PC-9 (cell line): ENCODE measurements at regions of chr2 and their contacts with region 1.

Region 1: GRCh38 chr2:237864940-237865622 is 5.7 kb downstream of the RAMP1 start:
- DNase-seq: peak; percentile 85 to 87
- H3K4me3 ChIP-seq: peak overlapping the region; percentile 12; the same call in 1 of the 2 replicates
- H3K27ac ChIP-seq: peak overlapping the region; percentile 82
- H3K4me1 ChIP-seq: peaks cover 99% of the 10 kb centered on the region
- H3K27me3 ChIP-seq: no peaks in the 10 kb centered on the region
- CTCF ChIP-seq: no peak

Region 2: DNA sequence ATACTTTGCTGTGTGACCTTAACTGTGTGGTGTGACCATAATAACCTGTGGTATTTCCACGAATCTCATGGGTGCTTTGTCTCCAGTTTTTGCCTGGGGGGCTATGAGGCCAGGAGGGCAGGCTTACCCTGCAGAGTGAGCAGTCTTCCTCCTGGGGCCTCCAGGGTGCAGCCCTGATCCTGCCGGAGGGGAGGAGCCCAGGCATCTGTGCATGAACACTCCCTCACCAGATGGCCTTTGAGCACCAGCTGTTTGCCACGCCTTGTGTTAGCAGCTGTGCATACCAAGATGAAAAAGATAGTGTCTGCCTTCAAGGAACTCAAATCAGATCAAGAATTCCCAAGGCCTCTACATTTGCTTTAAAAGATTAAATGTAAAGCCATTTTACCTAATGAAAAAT is 141.5 kb before region 1 on chr2:
- CTCF ChIA-PET with region 1: no interaction called
- POLR2A ChIA-PET with region 1: interaction called, 28 read pairs
- intact Hi-C with region 1: no loop called
- DNase-seq: peak; percentile 67 to 70
- H3K4me3 ChIP-seq: no peak overlapping the region
- H3K27ac ChIP-seq: no peak overlapping the region
- H3K4me1 ChIP-seq: peaks cover 8% of the 10 kb centered on the region; the same call in 1 of the 2 replicates
- H3K27me3 ChIP-seq: no peaks in the 10 kb centered on the region
- CTCF ChIP-seq: no peak

Region 3: DNA sequence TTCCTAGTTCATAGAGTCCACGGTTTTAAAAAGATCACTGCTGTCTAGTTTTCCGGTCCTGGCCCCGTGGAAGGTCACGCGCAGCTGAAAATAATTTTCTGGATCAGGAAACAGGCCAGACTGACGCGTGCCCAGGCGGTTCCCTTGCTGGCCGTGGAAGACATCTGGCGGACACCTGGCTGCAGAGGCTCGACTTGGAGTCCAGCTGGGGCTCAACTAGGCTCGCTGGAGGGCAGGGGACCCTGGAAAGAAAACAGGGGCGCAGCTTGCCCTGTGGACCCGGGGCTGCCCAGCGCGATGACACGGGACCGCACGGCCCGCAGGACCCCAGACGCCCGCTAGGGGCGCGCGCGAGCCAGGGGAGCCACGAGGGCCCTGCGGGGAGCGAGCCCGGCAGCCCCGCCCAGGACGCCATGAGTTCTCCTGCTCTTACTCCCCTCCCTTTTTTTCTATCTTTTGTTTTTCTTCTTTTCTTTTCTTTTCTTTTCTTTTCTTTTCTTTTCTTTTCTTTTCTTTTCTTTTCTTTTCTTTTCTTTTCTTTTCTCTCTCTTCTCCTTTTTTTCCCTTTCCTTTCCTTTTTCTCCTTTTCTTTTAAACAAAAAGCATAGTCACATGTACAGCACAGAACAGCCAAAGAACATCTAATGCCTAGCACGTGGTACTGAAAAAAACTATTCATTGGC is 58.5 kb after region 1 on chr2:
- CTCF ChIA-PET with region 1: no interaction called
- POLR2A ChIA-PET with region 1: interaction called, 6 read pairs
- intact Hi-C with region 1: loop called (anchors 5 kb)
- DNase-seq: no peak
- H3K4me3 ChIP-seq: no peak overlapping the region
- H3K27ac ChIP-seq: no peak overlapping the region
- H3K4me1 ChIP-seq: peaks cover 23% of the 10 kb centered on the region
- H3K27me3 ChIP-seq: no peaks in the 10 kb centered on the region
- CTCF ChIP-seq: no peak

Region 4: GRCh38 chr2:238119756-238120462 is 254.8 kb after region 1 on chr2:
- CTCF ChIA-PET with region 1: no interaction called
- POLR2A ChIA-PET with region 1: interaction called, 31 read pairs
- intact Hi-C with region 1: no loop called
- DNase-seq: no peak
- H3K4me3 ChIP-seq: no peak overlapping the region
- H3K27ac ChIP-seq: no peak overlapping the region
- H3K4me1 ChIP-seq: 0 out of 2 replicates have a peak, but pooled peaks cover 4% of the 10 kb centered on the region
- H3K27me3 ChIP-seq: peaks cover 78% of the 10 kb centered on the region
- CTCF ChIP-seq: no peak

Region 5: DNA sequence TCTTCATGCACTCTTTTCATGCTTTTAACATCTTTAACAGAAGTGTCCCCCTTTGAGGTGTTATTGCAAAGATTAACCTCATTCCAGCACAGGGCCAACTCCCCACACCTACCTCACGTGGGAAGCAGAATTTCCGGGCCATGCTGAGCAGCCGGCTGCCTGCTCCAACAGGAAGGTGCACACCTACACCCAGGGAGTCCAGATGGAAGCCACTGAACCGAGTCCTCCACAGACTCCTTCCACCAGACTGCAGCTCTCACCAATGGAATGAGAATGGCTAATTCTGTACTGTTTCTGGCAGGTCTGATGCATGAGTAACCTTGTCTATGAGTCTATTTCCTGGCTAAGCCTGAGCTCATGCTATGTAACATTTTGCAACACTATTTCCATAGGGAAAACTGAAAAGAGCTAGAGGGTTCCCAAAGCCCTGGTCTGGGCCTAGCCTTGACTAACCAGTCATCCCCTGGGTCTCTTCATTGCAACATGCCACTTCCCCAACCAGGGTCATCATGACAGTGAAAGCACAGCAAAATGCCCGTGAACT is 304.7 kb after region 1 on chr2:
- CTCF ChIA-PET with region 1: no interaction called
- POLR2A ChIA-PET with region 1: interaction called, 17 read pairs
- intact Hi-C with region 1: no loop called
- DNase-seq: peak in 1 of 2 experiments; percentile 57
- H3K4me3 ChIP-seq: peak overlapping the region; percentile 7; the same call in 1 of the 2 replicates
- H3K27ac ChIP-seq: peak overlapping the region; percentile 90
- H3K4me1 ChIP-seq: peaks cover 26% of the 10 kb centered on the region
- H3K27me3 ChIP-seq: no peaks in the 10 kb centered on the region
- CTCF ChIP-seq: no peak